Gastrocnemius medialis (tissue), 4 donors: ENCODE measurements at regions of chr1 and their contacts with region 1.

Region 1: GRCh38 chr1:162854245-162854882 is 6.6 kb downstream of the CCDC190 start:
- DNase-seq: peak; percentile 11 to 14
- ATAC-seq: no peak
- H3K4me3 ChIP-seq: no peak overlapping the region
- H3K27ac ChIP-seq: no peak overlapping the region
- H3K4me1 ChIP-seq: no peaks in the 10 kb centered on the region
- H3K27me3 ChIP-seq: no peaks in the 10 kb centered on the region
- CTCF ChIP-seq: peak in 3 of 5 experiments; percentile 36 to 66 (median 56)
- POLR2A ChIP-seq: no peak

Region 2: GRCh38 chr1:161973924-161974845 is 880.2 kb before region 1 on chr1:
- in situ Hi-C with region 1: no loop called
- intact Hi-C with region 1: no loop called
- DNase-seq: peak; percentile 11 to 69
- ATAC-seq: peak; percentile 41 to 76
- H3K4me3 ChIP-seq: no peak overlapping the region
- H3K27ac ChIP-seq: peak overlapping the region in 3 of 4 donors; percentile 10 to 55 (median 33)
- H3K4me1 ChIP-seq: peaks cover 9 to 13% of the 10 kb centered on the region in 2 donors
- H3K27me3 ChIP-seq: no peaks in the 10 kb centered on the region
- CTCF ChIP-seq: no peak
- POLR2A ChIP-seq: no peak

Region 3: GRCh38 chr1:163321311-163322305 is 467.2 kb after region 1 on chr1 and contains the start of gene NUF2:
- in situ Hi-C with region 1: loop called in 3 of 4 experiments (anchors 10 to 25 kb)
- intact Hi-C with region 1: loop called (anchors 2 kb)
- DNase-seq: peak; percentile 95 to 96
- ATAC-seq: peak; percentile 99
- H3K4me3 ChIP-seq: peak within 1 kb of the TSS; percentile 76 to 78 (median 78)
- H3K27ac ChIP-seq: peak within 1 kb of the TSS; percentile 69 to 76 (median 72)
- H3K4me1 ChIP-seq: peaks cover 16 to 19% of the 10 kb centered on the region in 2 donors
- H3K27me3 ChIP-seq: no peaks in the 10 kb centered on the region
- CTCF ChIP-seq: peak in 2 of 5 experiments; percentile 4 to 18
- POLR2A ChIP-seq: peak in 1 of 2 donors; percentile 8
- total RNA-seq, gene NUF2: not detected